ENCODE measurements at regions of chr17 and their contacts with region 1.

Region 1: GRCh38 chr17:27236717-27237315 is 57.1 kb upstream of the WSB1 start:
- DNase-seq: peak; percentile 67
- CTCF ChIP-seq: peak; percentile 84

Region 2: GRCh38 chr17:27153005-27153404 is 83.8 kb before region 1 on chr17:
- in situ Hi-C with region 1: no loop called
- DNase-seq: no peak
- CTCF ChIP-seq: no peak

Region 3: DNA sequence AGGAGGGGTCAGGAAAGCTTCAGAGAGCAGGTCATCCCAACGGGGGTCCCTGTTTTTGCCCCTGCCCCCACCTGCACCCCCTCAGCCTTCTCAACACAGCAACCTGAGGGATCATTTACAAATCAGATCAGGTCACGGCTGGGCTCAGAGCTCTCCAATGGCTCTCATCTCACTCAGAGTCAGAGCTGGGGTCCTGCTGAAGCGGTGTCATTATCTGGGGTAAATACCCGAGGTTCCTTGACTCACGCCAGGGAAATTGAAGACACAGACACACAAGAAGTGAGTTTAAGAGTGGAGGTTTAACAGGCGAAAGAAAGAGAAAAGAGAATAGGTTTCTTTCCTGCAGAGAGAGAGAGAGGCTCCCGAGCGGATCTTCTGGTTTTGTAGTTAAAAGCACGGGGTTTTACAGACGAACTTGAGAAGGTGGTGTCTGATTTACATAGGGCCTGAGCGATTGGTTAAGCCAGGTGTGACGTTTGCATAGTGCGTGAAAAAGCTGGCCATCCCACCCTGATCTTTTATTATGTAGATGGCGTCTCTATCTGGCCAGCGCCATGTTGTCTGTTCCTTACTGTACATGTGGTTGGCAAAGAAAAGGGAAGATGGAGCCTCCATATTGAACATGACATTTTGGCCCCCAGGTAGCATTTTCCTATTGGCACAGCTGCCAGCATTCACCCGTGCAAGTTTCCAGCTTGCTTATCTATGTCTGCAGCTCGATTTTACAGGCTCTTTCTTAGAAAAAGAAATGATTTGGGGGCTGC is 108.5 kb after region 1 on chr17:
- in situ Hi-C with region 1: loop called (anchors 10 kb)
- DNase-seq: no peak
- CTCF ChIP-seq: no peak

Measured in GM13977 (cell line).